PC-3 (cell line): ENCODE measurements at regions of chr4 and their contacts with region 1.

Region 1: GRCh38 chr4:56622176-56622575 is 58.9 kb downstream of the HOPX start:
- DNase-seq: peak; percentile 88
- ATAC-seq: peak; percentile 76
- H3K4me3 ChIP-seq: no peak overlapping the region
- H3K27ac ChIP-seq: peak overlapping the region; percentile 66
- H3K4me1 ChIP-seq: peaks cover 26% of the 10 kb centered on the region
- H3K27me3 ChIP-seq: no peaks in the 10 kb centered on the region
- CTCF ChIP-seq: no peak

Region 2: GRCh38 chr4:56575820-56576429 is 46.3 kb before region 1 on chr4:
- CTCF ChIA-PET with region 1: interaction called, 6 read pairs
- POLR2A ChIA-PET with region 1: no interaction called
- intact Hi-C with region 1: loop called (anchors 2 kb)
- DNase-seq: peak; percentile 67
- ATAC-seq: peak; percentile 83
- H3K4me3 ChIP-seq: no peak overlapping the region
- H3K27ac ChIP-seq: no peak overlapping the region
- H3K4me1 ChIP-seq: no peaks in the 10 kb centered on the region
- H3K27me3 ChIP-seq: no peaks in the 10 kb centered on the region
- CTCF ChIP-seq: peak; percentile 84

Region 3: GRCh38 chr4:56742080-56742871 is 120.1 kb after region 1 on chr4:
- CTCF ChIA-PET with region 1: no interaction called
- POLR2A ChIA-PET with region 1: no interaction called
- intact Hi-C with region 1: loop called (anchors 1 kb)
- DNase-seq: peak; percentile 66
- ATAC-seq: peak; percentile 65
- H3K4me3 ChIP-seq: no peak overlapping the region
- H3K27ac ChIP-seq: peak overlapping the region; percentile 5; the same call in 1 of the 2 replicates
- H3K4me1 ChIP-seq: peaks cover 21% of the 10 kb centered on the region
- H3K27me3 ChIP-seq: no peaks in the 10 kb centered on the region
- CTCF ChIP-seq: no peak

Region 4: DNA sequence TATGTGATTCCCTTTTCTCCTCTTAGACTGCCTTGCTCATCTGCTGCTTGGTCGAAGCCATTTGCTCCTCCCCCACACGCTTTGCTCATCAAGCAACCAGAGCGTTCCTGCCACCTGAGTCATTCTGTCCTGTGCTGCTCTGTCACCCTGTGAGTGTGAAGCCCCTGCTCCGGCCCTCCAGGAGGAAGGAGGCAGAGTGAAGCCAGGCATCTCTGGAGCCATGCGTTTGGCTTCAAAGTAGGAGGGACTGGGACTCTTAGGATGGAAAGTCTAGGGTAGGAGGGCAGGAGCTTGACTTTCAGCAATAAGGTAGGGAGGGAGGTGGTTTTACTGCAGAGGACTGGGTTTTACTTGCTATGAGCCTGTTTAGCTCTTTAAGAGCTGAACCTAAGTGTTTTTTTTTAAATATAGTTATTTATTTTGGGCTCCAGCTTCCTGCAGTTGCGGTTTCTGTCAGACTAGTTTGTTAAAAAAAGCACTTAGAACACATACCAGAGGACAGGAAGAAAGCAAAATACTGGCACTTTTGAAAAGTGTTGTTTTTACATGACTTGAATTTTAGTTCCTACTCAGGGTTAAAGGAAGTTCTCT is 135.7 kb after region 1 on chr4:
- CTCF ChIA-PET with region 1: no interaction called
- POLR2A ChIA-PET with region 1: no interaction called
- intact Hi-C with region 1: loop called (anchors 1 kb)
- DNase-seq: peak; percentile 98
- ATAC-seq: peak; percentile 89
- H3K4me3 ChIP-seq: peak overlapping the region; percentile 43
- H3K27ac ChIP-seq: peak overlapping the region; percentile 74
- H3K4me1 ChIP-seq: peaks cover 39% of the 10 kb centered on the region
- H3K27me3 ChIP-seq: no peaks in the 10 kb centered on the region
- CTCF ChIP-seq: no peak